ENCODE measurements at regions of chr17 and their contacts with region 1.

Region 1: GRCh38 chr17:42153919-42154742 is 658 bp downstream of the RAB5C start:
- DNase-seq: no peak
- H3K4me3 ChIP-seq: peak overlapping the region; percentile 89
- CTCF ChIP-seq: no peak

Region 2: GRCh38 chr17:42142371-42142896 is 11.7 kb before region 1 on chr17:
- CTCF ChIA-PET with region 1: interaction called, 13 read pairs
- POLR2A ChIA-PET with region 1: interaction called, 8 read pairs
- DNase-seq: peak; percentile 56
- H3K4me3 ChIP-seq: no peak overlapping the region
- CTCF ChIP-seq: no peak

Region 3: GRCh38 chr17:42214156-42214555 is 60.0 kb after region 1 on chr17:
- CTCF ChIA-PET with region 1: no interaction called
- POLR2A ChIA-PET with region 1: no interaction called
- DNase-seq: no peak
- H3K4me3 ChIP-seq: no peak overlapping the region
- CTCF ChIP-seq: no peak

Region 4: DNA sequence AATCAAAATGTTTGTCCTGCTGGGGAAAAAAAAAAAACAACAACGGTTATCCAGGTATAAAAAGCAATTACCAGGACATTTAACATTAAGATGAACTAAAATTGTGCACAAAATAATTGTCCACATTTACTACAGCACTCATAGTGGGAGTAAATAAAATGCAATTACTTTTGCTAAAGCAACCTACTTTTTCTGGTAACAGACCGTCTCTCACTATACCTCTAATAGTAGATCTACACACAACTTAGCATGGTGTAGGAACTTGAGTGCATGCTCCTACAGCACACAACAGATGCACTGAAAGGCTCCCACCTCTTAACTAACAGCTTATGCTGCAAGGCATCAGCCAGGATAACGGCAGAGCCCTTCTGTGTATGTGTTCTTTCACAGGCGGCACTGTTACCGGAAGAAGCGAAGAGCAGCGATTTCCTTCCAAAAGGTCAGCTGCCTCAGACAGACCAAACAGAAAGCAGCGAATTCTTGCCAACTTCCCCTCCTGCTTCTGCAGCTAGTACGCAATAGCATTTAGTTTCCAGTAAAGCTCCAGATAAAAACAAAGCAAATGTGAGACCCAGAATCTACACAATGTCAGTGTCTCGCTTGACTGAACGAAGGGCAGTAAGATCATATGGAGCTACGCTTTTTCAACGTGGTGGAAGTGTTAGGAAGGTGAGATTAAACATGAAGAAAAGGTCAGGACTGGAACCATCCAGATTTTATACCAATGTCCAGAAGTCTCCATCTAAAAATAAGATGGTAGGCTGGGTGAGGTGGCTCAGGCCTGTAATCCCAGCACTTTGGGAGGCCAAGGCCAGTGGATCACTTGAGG is 94.4 kb after region 1 on chr17:
- CTCF ChIA-PET with region 1: no interaction called
- POLR2A ChIA-PET with region 1: no interaction called
- DNase-seq: no peak
- H3K4me3 ChIP-seq: no peak overlapping the region
- CTCF ChIP-seq: no peak

Measured in AG04449 (cell line).